ENCODE measurements at regions of chr3 and their contacts with region 1.

Region 1: GRCh38 chr3:176855956-176856355 is 341.3 kb downstream of the TBL1XR1 start:
- DNase-seq: no peak
- ATAC-seq: no peak
- H3K4me3 ChIP-seq: no peak overlapping the region
- H3K27ac ChIP-seq: no peak overlapping the region
- H3K4me1 ChIP-seq: no peaks in the 10 kb centered on the region
- H3K27me3 ChIP-seq: no peaks in the 10 kb centered on the region
- CTCF ChIP-seq: no peak

Region 2: DNA sequence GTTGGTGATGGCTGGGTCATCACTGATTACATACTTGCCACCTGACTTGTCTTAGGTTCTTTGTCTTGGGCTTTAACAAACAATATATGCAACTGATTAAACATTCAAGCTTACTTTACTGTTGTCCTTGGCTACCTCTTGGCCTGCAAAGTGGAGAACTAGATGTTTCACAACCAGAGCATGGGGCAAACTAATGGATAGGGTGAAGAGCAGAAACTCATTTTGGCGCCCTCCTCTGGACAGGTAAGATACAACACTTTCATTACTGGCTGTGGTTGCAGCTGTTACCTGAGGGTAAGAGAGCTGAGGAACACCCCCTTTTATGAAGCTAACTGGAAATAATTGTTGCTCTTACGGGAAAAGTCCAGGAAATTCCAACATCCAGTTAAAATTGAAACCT is 1734.7 kb before region 1 on chr3:
- CTCF ChIA-PET with region 1: no interaction called
- POLR2A ChIA-PET with region 1: interaction called, 11 read pairs
- in situ Hi-C with region 1: no loop called
- intact Hi-C with region 1: no loop called
- DNase-seq: no peak
- ATAC-seq: no peak
- H3K4me3 ChIP-seq: no peak overlapping the region
- H3K27ac ChIP-seq: no peak overlapping the region
- H3K4me1 ChIP-seq: no peaks in the 10 kb centered on the region
- H3K27me3 ChIP-seq: no peaks in the 10 kb centered on the region
- CTCF ChIP-seq: peak; percentile 60

Region 3: DNA sequence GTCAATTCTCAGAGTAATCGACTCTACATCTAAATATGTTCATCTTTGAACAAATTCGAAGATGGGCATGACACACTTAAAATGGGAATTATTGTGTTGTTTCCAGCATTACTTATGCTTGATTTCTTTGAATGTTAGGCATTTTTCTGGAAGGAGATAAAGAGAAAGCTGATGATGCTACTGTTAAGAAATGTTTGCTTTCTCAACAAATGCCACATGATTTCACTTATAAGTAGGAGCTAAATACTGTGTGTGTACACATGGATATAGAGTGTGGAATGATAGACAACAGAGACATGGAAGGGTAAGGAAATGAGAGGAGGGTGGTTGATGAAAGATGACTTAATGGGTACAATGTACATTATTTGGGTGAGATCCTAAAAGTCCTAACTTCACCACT is 59.6 kb before region 1 on chr3:
- CTCF ChIA-PET with region 1: no interaction called
- POLR2A ChIA-PET with region 1: no interaction called
- in situ Hi-C with region 1: no loop called
- intact Hi-C with region 1: no loop called
- DNase-seq: no peak
- ATAC-seq: no peak
- H3K4me3 ChIP-seq: no peak overlapping the region
- H3K27ac ChIP-seq: no peak overlapping the region
- H3K4me1 ChIP-seq: no peaks in the 10 kb centered on the region
- H3K27me3 ChIP-seq: no peaks in the 10 kb centered on the region
- CTCF ChIP-seq: no peak

Region 4: DNA sequence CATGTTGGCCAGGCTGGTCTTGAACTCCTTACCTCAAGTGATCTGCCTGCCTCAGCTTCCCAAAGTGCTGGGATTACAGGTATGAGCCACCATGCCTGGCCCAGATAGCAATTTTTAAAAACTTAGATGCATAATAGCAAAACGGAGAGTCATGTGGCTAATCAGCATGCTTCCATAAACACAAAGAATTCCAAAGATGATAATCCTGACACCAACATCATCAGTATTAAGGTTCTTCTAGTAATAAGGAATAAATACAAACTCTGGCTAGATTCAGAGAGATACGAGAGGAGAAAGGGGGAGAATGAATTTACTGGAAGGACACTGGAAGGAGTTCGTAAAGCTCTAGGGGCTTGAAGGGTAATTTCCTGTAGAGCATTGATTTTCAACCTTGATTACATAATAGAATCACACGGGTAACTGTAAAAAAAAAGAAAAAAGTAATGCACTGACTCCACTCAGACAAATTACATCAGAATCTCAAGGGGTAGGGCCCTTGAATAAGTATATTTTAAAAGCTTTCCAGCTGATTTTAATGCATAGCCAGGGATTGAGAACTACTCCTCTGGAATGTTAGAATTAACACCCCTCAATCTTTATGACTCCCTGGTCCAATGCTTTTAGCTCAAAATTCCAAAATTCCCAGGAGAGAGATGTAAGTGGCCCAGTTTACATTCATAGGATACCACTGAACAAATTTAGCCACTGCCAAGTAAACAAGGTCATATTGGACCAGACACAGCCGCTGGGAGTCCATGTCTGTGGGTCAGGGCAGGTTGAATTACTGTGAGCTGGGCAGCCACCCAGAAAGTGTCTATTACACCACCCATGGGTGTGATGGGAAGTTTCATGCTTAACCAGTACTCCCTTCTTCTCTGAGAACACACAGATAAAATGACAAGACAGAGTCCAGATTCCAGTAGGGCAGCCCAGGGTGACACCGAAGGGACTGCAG is 97.4 kb after region 1 on chr3:
- CTCF ChIA-PET with region 1: no interaction called
- POLR2A ChIA-PET with region 1: no interaction called
- in situ Hi-C with region 1: no loop called
- intact Hi-C with region 1: no loop called
- DNase-seq: no peak
- ATAC-seq: no peak
- H3K4me3 ChIP-seq: no peak overlapping the region
- H3K27ac ChIP-seq: no peak overlapping the region
- H3K4me1 ChIP-seq: no peaks in the 10 kb centered on the region
- H3K27me3 ChIP-seq: no peaks in the 10 kb centered on the region
- CTCF ChIP-seq: no peak

Measured in Panc1 (cell line).